H1 (cell line): ENCODE measurements at regions of chr2 and their contacts with region 1.

Region 1: DNA sequence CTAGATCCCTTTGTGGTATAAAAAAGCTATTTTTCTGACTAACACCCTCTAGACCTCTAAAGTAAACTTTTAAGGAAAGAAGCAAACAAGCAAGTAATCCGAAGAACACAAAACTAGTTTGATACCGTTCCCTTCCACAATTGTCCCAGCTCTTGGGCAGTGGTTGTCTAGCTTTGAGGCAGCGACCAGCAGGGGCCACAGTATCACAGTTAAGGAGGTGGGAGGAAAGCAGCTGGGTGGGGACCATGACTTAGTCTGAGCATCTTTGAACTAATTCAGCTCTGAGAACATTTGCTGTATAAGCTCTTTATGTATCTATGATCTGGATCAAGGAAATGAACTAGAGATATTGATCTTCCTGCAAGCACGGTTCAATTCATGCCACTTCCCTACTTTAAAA is 51.0 kb downstream of the SF3B1 start:
- DNase-seq: no peak
- H3K4me3 ChIP-seq: no peak overlapping the region
- H3K27ac ChIP-seq: no peak overlapping the region
- H3K4me1 ChIP-seq: no peaks in the 10 kb centered on the region
- H3K27me3 ChIP-seq: no peaks in the 10 kb centered on the region
- CTCF ChIP-seq: peak in 2 of 3 experiments; percentile 14 to 26; a peak in 2 of 4 replicates
- EP300 ChIP-seq: no peak
- POLR2A ChIP-seq: no peak
- RAD21 ChIP-seq: peak in 1 of 2 experiments; percentile 40; a peak in 3 of 4 replicates

Region 2: DNA sequence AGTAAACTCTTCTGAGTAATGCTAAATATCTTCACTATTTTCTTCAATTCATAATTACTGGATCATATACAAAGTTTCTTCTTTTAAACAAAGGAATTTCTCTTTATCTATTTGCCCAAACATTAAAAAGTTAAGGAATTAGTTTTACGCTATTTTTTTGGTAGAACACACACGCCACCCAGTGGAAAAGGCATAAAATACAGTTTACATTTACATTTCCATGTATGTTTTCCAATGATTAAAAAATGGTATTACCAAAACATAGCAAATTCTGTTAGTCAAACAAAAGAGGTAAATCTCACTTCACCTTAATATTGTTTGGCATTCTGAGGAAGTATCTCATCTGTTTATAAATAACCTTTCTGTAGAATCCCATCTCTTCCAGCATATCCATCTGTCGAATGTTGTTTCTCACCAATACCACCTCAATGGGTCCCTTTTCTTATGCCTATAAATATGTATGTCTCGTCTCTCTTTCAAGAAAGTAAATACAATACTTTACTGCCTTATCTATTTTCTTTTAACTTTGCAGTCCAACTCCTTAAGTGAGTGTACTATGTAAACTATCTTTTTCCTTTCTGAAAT is 394.1 kb after region 1 on chr2:
- CTCF ChIA-PET with region 1: interaction called, 12 read pairs
- POLR2A ChIA-PET with region 1: no interaction called
- DNase-seq: no peak
- H3K4me3 ChIP-seq: no peak overlapping the region
- H3K27ac ChIP-seq: no peak overlapping the region
- H3K4me1 ChIP-seq: no peaks in the 10 kb centered on the region
- H3K27me3 ChIP-seq: no peaks in the 10 kb centered on the region
- CTCF ChIP-seq: peak in 2 of 3 experiments; percentile 40 to 45; a peak in 2 of 4 replicates
- EP300 ChIP-seq: no peak
- POLR2A ChIP-seq: no peak
- RAD21 ChIP-seq: peak; percentile 72 to 86